ENCODE measurements at regions of chr17 and their contacts with region 1.

Region 1: DNA sequence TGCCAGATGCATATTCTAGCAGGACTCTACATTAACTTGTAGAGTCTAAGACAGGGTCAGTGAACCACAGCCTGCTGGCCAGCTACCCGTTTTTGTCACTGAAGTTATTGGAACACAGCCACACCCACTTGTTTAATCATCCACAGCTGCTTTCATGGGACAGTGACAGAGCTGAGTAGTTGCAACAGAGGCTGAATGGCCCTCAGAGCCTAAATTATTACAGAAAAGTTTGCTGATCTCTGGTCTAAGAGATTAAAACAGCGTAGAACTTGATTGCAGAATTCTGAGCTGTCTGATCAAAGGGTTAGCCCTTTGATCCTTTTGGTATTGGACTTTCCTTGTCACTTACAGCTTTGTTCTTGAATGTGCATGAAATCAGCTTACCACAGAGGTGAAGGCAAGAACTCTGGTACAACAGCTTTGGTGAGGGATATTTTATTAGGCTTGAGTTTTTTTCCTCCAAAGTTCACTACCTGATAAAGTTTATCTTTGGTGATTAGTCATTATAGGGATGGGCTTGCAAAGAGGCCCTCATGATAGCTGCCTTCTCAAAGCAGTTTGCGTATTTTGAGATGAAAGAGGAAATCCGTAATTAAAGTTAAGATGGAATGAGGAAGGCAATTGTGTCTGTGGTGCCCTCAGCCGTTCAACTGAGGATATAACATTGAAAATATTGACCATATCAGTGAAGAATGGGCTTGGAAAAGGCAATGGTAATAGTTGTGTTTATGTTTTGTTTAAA is 23.6 kb downstream of the ALDH3A2 start:
- DNase-seq: peak; percentile 81 to 95 (median 90)
- H3K4me3 ChIP-seq: no peak overlapping the region
- H3K27ac ChIP-seq: peak overlapping the region; percentile 37 to 82 (median 70)
- H3K4me1 ChIP-seq: peaks cover 11 to 37% of the 10 kb centered on the region in 2 donors
- H3K27me3 ChIP-seq: no peaks in the 10 kb centered on the region
- CTCF ChIP-seq: peak; percentile 10 to 49 (median 33)
- POLR2A ChIP-seq: peak in 1 of 2 donors; percentile 27

Region 2: GRCh38 chr17:19513897-19514488 is 158.2 kb before region 1 on chr17:
- intact Hi-C with region 1: loop called in 1 of 2 experiments (anchors 10 kb)
- DNase-seq: peak; percentile 65 to 91 (median 79)
- H3K4me3 ChIP-seq: no peak overlapping the region
- H3K27ac ChIP-seq: peak overlapping the region in 2 of 5 donors; percentile 57 to 61
- H3K4me1 ChIP-seq: peaks cover 0 to 8% of the 10 kb centered on the region in 2 donors
- H3K27me3 ChIP-seq: no peaks in the 10 kb centered on the region
- CTCF ChIP-seq: peak; percentile 83 to 97 (median 92)
- POLR2A ChIP-seq: no peak

Region 3: DNA sequence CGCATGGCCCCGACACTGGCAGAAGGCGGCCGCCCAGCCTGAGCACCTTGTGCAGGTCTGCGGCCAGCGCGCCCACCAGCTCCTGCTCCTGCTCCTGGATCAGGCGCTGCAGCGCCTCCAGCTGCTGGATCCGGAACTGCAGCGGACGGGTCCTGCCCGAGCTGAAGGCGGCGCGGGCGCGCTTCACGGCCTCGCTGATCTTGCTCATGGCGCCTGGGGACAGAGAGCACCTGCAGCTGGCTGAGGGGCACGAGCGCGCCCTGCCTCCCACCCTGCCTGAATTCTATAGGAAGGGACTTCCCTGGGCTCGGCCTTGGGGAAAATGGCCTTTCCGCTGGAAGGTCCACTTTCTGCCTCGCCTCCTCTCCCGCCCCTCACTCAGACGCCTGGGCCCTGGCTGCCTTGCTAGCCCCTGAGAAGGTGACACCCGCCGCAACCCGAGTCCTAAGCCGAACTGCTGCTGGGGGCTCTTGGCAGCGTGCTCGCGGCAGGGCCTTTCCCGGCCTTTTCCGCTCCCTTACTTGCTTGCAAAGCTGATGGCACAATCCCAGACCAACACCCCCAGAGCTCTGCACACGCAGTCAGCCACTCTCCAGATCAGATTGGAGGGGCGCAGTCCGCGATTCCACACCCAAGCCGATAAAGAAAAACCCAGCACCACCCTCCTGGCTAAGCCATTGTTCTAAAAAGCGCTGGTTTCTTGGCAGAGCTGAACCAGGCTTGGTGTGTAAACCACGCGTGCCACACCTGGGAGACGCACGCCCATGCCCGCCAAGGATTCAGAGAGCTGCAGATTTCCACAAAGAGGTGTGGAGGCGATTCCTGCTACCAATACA is 73.0 kb after region 1 on chr17:
- intact Hi-C with region 1: loop called (anchors 10 kb)
- DNase-seq: peak; percentile 90 to 97 (median 95)
- H3K4me3 ChIP-seq: peak overlapping the region in 2 of 4 donors; percentile 28 to 53
- H3K27ac ChIP-seq: peak overlapping the region in 2 of 5 donors; percentile 5 to 12
- H3K4me1 ChIP-seq: peaks cover 6 to 8% of the 10 kb centered on the region in 2 donors
- H3K27me3 ChIP-seq: no peaks in the 10 kb centered on the region
- CTCF ChIP-seq: peak; percentile 67 to 98 (median 92)
- POLR2A ChIP-seq: peak in 1 of 2 donors; percentile 18

Region 4: GRCh38 chr17:19753049-19753444 is 80.9 kb after region 1 on chr17:
- intact Hi-C with region 1: loop called (anchors 10 kb)
- DNase-seq: peak; percentile 81 to 95 (median 92)
- H3K4me3 ChIP-seq: no peak overlapping the region
- H3K27ac ChIP-seq: peak overlapping the region in 4 of 5 donors; percentile 60 to 94 (median 82)
- H3K4me1 ChIP-seq: peaks cover 13 to 15% of the 10 kb centered on the region in 2 donors
- H3K27me3 ChIP-seq: no peaks in the 10 kb centered on the region
- CTCF ChIP-seq: peak in 1 of 6 experiments; percentile 9
- POLR2A ChIP-seq: peak in 1 of 2 donors; percentile 68